K562 (cell line): ENCODE measurements at regions of chrX and their contacts with region 1.

Region 1: GRCh38 chrX:136608295-136609171 is 39.4 kb upstream of the CD40LG start:
- DNase-seq: peak in 1 of 4 experiments; percentile 2
- ATAC-seq: no peak
- H3K4me3 ChIP-seq: no peak overlapping the region
- H3K27ac ChIP-seq: no peak overlapping the region
- H3K4me1 ChIP-seq: no peaks in the 10 kb centered on the region
- H3K27me3 ChIP-seq: peaks cover 2 to 5% of the 10 kb centered on the region in 2 experiments; a peak in 1 of 5 replicates
- CTCF ChIP-seq: peak; percentile 18 to 38 (median 31); a peak in 2 of 6 replicates
- EP300 ChIP-seq: no peak
- POLR2A ChIP-seq: no peak
- RAD21 ChIP-seq: peak; percentile 54 to 57

Region 2: GRCh38 chrX:136694431-136695087 is 86.0 kb after region 1 on chrX:
- CTCF ChIA-PET with region 1: no interaction called
- POLR2A ChIA-PET with region 1: no interaction called
- in situ Hi-C with region 1: no loop called
- intact Hi-C with region 1: loop called (anchors 1 kb)
- DNase-seq: peak; percentile 21 to 52 (median 37)
- ATAC-seq: peak; percentile 82
- H3K4me3 ChIP-seq: no peak overlapping the region
- H3K27ac ChIP-seq: no peak overlapping the region
- H3K4me1 ChIP-seq: no peaks in the 10 kb centered on the region; a peak in 1 of 5 replicates
- H3K27me3 ChIP-seq: no peaks in the 10 kb centered on the region
- CTCF ChIP-seq: peak; percentile 58 to 75 (median 66)
- EP300 ChIP-seq: no peak
- POLR2A ChIP-seq: no peak
- RAD21 ChIP-seq: peak; percentile 66 to 81